GM12878 (cell line): ENCODE measurements at regions of chr5 and their contacts with region 1.

Region 1: DNA sequence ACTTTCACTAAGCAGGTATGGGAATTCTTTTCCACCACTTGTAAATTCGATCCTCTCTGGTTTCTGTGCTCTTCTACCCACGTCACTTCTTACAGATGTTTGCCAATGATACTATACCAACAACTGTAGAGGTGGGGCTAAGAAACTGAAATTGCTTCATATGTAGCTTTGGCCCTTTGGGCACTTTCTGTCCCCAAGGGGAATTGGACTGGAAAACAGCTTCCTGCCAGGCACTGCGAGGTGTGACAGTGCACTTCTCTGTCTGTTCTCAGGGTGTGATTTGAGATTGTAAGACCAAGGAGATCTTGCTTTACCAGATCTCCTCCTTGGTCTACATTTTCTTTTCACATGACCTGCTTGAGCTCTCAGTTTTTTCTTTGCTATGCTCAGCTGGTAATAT is 164.2 kb downstream of the CCDC192 start:
- DNase-seq: no peak
- ATAC-seq: peak; percentile 79
- H3K4me3 ChIP-seq: no peak overlapping the region
- H3K27ac ChIP-seq: no peak overlapping the region
- H3K4me1 ChIP-seq: no peaks in the 10 kb centered on the region
- H3K27me3 ChIP-seq: no peaks in the 10 kb centered on the region
- CTCF ChIP-seq: no peak
- EP300 ChIP-seq: no peak
- POLR2A ChIP-seq: no peak
- RAD21 ChIP-seq: no peak

Region 2: DNA sequence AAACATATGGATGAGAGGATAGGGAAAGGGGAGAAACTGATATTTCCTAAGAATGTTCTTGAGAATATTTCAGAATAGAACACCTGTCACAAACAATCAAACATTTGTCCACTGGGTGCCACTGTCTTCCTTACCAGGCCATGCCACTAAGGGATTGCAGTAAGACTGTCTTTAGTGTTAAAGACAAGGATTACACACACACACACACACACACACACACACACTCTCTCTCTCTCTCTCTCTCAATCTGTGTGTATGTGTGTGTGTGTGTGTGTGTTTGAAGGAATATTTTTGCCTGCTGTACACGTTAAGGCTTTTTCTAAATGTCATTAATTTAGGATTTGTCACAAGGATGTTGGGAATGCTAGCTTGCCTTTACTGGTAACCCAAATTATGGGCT is 109.8 kb before region 1 on chr5:
- CTCF ChIA-PET with region 1: interaction called, 11 read pairs
- POLR2A ChIA-PET with region 1: no interaction called
- RAD21 ChIA-PET with region 1: interaction called, 5 read pairs
- SMC1A ChIA-PET with region 1: interaction called, 10 read pairs
- in situ Hi-C with region 1: no loop called
- intact Hi-C with region 1: loop called (anchors 2 kb)
- DNase-seq: peak; percentile 16
- ATAC-seq: peak; percentile 92
- H3K4me3 ChIP-seq: no peak overlapping the region
- H3K27ac ChIP-seq: no peak overlapping the region
- H3K4me1 ChIP-seq: no peaks in the 10 kb centered on the region
- H3K27me3 ChIP-seq: no peaks in the 10 kb centered on the region
- CTCF ChIP-seq: peak; percentile 14 to 60 (median 21); a peak in 4 of 6 replicates
- EP300 ChIP-seq: no peak
- POLR2A ChIP-seq: no peak
- RAD21 ChIP-seq: peak; percentile 65

Region 3: DNA sequence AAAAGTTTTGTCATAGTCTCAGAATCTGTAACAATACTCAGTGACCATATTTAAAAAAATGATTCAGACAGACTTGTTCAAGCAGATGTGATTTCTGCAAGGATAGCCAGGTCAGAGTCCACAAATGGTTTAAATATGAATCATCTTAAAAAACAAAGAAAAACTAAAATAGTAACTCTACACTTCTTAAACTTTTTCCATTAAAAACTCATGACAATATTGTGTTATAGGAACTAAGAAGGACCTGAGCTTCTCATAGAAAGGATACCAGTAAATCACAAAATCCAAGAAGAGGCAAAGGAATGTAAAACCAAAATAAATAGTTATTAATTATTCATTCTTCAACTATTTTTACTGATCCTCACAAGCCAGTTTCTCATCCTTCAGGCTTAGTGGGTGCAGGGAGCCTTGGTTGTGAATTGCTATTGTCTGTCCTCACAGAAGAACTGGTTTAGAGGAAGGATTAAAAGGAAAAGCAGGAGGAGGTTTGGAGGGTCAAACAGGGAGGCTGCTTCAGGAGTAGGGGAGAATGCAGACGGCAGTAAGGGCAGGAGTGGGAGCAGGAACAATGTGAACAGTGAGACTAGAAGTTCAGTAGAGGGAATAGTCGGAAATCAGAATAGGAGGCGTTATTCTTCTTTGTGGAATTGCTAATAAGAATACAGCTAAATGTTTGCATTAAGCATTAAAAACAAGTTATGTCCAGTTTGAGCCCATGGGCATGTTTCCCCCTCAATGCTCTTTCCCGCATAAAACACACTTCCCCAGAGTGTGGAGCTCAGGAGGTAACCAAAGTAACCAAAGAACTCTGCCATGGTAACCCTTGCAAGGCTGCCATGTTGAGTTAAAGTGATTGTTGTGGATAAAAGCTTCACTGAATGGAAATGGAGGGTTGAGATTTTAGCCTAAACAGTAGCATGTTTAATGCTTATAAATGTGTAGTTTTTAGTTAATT is 53.5 kb before region 1 on chr5:
- CTCF ChIA-PET with region 1: interaction called, 4 read pairs
- POLR2A ChIA-PET with region 1: no interaction called
- RAD21 ChIA-PET with region 1: no interaction called
- SMC1A ChIA-PET with region 1: interaction called, 11 read pairs
- in situ Hi-C with region 1: no loop called
- intact Hi-C with region 1: no loop called
- DNase-seq: no peak
- ATAC-seq: peak; percentile 56
- H3K4me3 ChIP-seq: no peak overlapping the region
- H3K27ac ChIP-seq: no peak overlapping the region
- H3K4me1 ChIP-seq: no peaks in the 10 kb centered on the region
- H3K27me3 ChIP-seq: peaks cover 0 to 2% of the 10 kb centered on the region in 2 experiments; a peak in 1 of 4 replicates
- CTCF ChIP-seq: no peak
- EP300 ChIP-seq: no peak
- POLR2A ChIP-seq: no peak
- RAD21 ChIP-seq: no peak

Region 4: GRCh38 chr5:127839496-127840197 is 27.7 kb before region 1 on chr5:
- CTCF ChIA-PET with region 1: interaction called, 6 read pairs
- POLR2A ChIA-PET with region 1: interaction called, 3 read pairs
- RAD21 ChIA-PET with region 1: interaction called, 3 read pairs
- SMC1A ChIA-PET with region 1: interaction called, 20 read pairs
- in situ Hi-C with region 1: no loop called
- intact Hi-C with region 1: loop called (anchors 2 kb)
- DNase-seq: no peak
- ATAC-seq: peak; percentile 86
- H3K4me3 ChIP-seq: no peak overlapping the region
- H3K27ac ChIP-seq: no peak overlapping the region
- H3K4me1 ChIP-seq: no peaks in the 10 kb centered on the region
- H3K27me3 ChIP-seq: no peaks in the 10 kb centered on the region
- CTCF ChIP-seq: no peak
- EP300 ChIP-seq: no peak
- POLR2A ChIP-seq: no peak
- RAD21 ChIP-seq: no peak

Region 5: GRCh38 chr5:128201065-128201926 is 333.9 kb after region 1 on chr5:
- CTCF ChIA-PET with region 1: interaction called, 78 read pairs
- POLR2A ChIA-PET with region 1: no interaction called
- RAD21 ChIA-PET with region 1: interaction called, 3 read pairs
- SMC1A ChIA-PET with region 1: interaction called, 13 read pairs
- in situ Hi-C with region 1: no loop called
- intact Hi-C with region 1: no loop called
- DNase-seq: no peak
- ATAC-seq: peak; percentile 97
- H3K4me3 ChIP-seq: no peak overlapping the region
- H3K27ac ChIP-seq: no peak overlapping the region
- H3K4me1 ChIP-seq: peaks cover 4% of the 10 kb centered on the region; the same call in 1 of the 2 replicates
- H3K27me3 ChIP-seq: no peaks in the 10 kb centered on the region
- CTCF ChIP-seq: peak; percentile 81 to 90 (median 86)
- EP300 ChIP-seq: no peak
- POLR2A ChIP-seq: no peak
- RAD21 ChIP-seq: peak; percentile 97